ENCODE measurements at regions of chr6 and their contacts with region 1.

Region 1: DNA sequence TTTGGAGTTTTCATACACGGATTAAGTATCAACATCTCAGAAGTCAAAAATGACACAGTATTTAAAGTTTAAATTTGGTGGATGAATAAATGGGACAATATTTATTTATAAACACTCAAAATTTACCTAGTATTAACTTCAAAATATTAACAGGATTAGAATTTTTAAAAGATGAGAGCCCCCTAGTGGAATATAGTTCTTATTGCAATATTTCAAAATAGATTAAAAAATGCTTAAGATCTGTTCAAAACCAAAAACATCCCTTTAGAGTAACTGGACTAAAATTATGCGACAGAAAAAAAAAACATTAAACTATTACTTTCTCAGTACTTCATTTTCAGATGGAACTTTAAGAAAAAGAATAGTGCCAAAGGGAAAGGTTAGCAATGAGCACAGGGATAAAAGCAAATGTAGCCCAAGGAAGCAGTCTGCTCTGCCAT is 56.6 kb downstream of the SNX14 start:
- DNase-seq: peak; percentile 35
- ATAC-seq: no peak
- H3K4me3 ChIP-seq: no peak overlapping the region
- H3K27ac ChIP-seq: no peak overlapping the region
- H3K4me1 ChIP-seq: no peaks in the 10 kb centered on the region
- H3K27me3 ChIP-seq: no peaks in the 10 kb centered on the region
- CTCF ChIP-seq: peak; percentile 65

Region 2: GRCh38 chr6:85193339-85193738 is 343.7 kb before region 1 on chr6:
- CTCF ChIA-PET with region 1: no interaction called
- POLR2A ChIA-PET with region 1: no interaction called
- intact Hi-C with region 1: no loop called
- DNase-seq: no peak
- ATAC-seq: no peak
- H3K4me3 ChIP-seq: no peak overlapping the region
- H3K27ac ChIP-seq: no peak overlapping the region
- H3K4me1 ChIP-seq: no peaks in the 10 kb centered on the region; the same call in 1 of the 2 replicates
- H3K27me3 ChIP-seq: peaks cover 9% of the 10 kb centered on the region; the same call in 1 of the 2 replicates
- CTCF ChIP-seq: no peak

Region 3: DNA sequence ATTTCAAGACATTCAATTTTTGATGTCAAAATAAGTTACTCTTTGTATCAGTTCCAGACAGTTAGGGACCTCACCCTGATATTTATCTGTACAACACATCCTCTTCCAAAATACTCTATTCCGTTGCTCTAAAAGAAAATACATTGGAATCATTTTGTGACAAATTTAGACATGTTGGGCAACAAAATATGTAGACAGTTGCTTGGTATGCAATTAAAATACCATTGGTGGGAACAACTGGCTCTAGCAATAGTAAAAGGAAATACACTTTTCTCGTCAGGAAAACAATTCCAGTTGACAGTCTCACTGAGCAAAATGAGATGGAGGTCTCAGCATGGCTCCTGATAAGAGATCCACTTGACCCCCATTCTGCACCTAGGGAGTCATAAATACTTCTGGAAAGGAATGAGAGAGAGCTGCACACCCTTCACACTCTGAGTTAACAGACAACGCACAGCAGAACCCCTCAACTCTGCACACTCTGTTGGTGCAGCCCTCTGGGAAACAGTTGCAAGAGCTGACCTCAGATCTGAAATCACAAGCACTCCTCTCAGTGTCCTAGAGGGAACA is 258.5 kb before region 1 on chr6:
- CTCF ChIA-PET with region 1: no interaction called
- POLR2A ChIA-PET with region 1: no interaction called
- intact Hi-C with region 1: no loop called
- DNase-seq: no peak
- ATAC-seq: no peak
- H3K4me3 ChIP-seq: no peak overlapping the region
- H3K27ac ChIP-seq: no peak overlapping the region
- H3K4me1 ChIP-seq: peaks cover 7% of the 10 kb centered on the region; the same call in 1 of the 2 replicates
- H3K27me3 ChIP-seq: no peaks in the 10 kb centered on the region
- CTCF ChIP-seq: no peak

Region 4: GRCh38 chr6:85354761-85355618 is 182.1 kb before region 1 on chr6:
- CTCF ChIA-PET with region 1: no interaction called
- POLR2A ChIA-PET with region 1: no interaction called
- intact Hi-C with region 1: loop called (anchors 1 kb)
- DNase-seq: peak; percentile 76
- ATAC-seq: peak; percentile 88
- H3K4me3 ChIP-seq: no peak overlapping the region
- H3K27ac ChIP-seq: no peak overlapping the region
- H3K4me1 ChIP-seq: peaks cover 24% of the 10 kb centered on the region
- H3K27me3 ChIP-seq: no peaks in the 10 kb centered on the region
- CTCF ChIP-seq: peak; percentile 82

Region 5: GRCh38 chr6:85404502-85405174 is 132.4 kb before region 1 on chr6:
- CTCF ChIA-PET with region 1: no interaction called
- POLR2A ChIA-PET with region 1: no interaction called
- intact Hi-C with region 1: no loop called
- DNase-seq: peak; percentile 94
- ATAC-seq: peak; percentile 74
- H3K4me3 ChIP-seq: peak overlapping the region; percentile 45; the same call in 1 of the 2 replicates
- H3K27ac ChIP-seq: peak overlapping the region; percentile 95
- H3K4me1 ChIP-seq: peaks cover 48% of the 10 kb centered on the region
- H3K27me3 ChIP-seq: no peaks in the 10 kb centered on the region
- CTCF ChIP-seq: no peak